MCF 10A (cell line): ENCODE measurements at regions of chr16 and their contacts with region 1.

Region 1: DNA sequence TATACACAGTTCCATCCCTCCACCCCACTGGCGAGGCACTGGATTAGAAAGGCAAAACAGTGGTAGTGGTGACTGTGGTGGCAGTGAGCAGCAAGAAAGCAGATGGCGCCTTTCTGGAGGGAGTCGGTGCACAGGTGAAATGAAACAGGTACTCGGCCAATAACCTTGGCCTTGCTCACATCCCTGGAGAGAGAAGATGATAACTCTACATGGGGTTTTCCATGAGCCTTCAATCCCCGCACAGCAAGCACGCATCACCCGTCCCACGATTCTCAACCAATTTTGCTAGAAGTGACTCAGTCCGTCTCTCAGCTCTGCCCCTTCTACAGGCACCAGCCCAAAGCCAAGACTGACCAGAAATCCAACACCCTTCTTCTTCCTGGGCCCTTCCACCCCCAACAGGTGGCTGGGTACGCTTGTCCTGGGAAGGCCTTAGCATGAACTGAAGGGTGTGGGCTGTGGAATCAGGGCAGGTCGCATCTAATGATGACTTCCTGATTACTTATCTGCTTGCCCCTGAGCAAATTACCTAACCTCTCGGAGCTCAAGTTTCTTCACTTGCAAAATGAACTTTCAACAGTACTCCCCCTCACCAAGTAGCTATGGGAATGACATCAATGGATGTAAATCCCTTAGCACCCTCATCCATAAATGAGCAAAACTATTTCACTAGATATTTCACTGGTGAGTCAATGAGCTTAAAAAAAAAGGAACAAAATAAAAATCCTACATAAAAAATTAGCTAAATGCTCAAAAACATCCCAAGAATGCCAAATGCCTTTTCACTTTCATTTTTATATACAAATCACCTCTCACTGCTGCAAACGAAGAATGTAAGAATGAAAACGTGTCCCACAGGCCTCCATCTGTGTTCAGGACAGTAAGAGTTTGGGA is 18.0 kb downstream of the XPO6 start:
- DNase-seq: peak; percentile 62
- H3K4me3 Mint-ChIP-seq: no peak overlapping the region
- H3K27ac Mint-ChIP-seq: peak overlapping the region; percentile 50
- H3K4me1 Mint-ChIP-seq: peaks cover 33% of the 10 kb centered on the region
- H3K27me3 Mint-ChIP-seq: no peaks in the 10 kb centered on the region
- CTCF ChIP-seq: no peak

Region 2: GRCh38 chr16:28175715-28176114 is 18.1 kb before region 1 on chr16:
- CTCF ChIA-PET with region 1: no interaction called
- POLR2A ChIA-PET with region 1: interaction called, 19 read pairs
- intact Hi-C with region 1: no loop called
- DNase-seq: no peak
- H3K4me3 Mint-ChIP-seq: no peak overlapping the region
- H3K27ac Mint-ChIP-seq: no peak overlapping the region
- H3K4me1 Mint-ChIP-seq: peaks cover 20% of the 10 kb centered on the region
- H3K27me3 Mint-ChIP-seq: no peaks in the 10 kb centered on the region
- CTCF ChIP-seq: no peak

Region 3: DNA sequence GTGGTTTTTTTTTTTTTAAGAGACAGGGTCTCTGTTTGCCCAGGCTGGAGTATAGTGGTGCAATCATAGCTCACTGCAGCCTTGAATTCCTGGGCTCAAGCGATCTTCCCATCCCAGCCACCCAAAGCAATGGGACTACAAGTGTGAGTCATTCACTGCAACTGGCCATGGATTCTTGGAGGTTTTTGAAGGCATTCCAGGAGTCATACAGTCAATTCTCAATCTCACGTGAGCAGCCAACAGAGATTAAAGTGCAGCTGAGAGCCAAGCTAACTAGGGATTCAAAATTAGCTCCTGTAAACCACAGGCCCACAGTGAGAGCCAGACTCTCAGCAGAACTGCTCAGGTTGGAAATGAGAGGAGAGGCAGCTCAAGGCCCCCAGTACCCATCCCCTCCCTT is 12.3 kb before region 1 on chr16:
- CTCF ChIA-PET with region 1: no interaction called
- POLR2A ChIA-PET with region 1: interaction called, 19 read pairs
- intact Hi-C with region 1: no loop called
- DNase-seq: peak; percentile 94
- H3K4me3 Mint-ChIP-seq: no peak overlapping the region
- H3K27ac Mint-ChIP-seq: peak overlapping the region; percentile 62
- H3K4me1 Mint-ChIP-seq: peaks cover 31% of the 10 kb centered on the region
- H3K27me3 Mint-ChIP-seq: no peaks in the 10 kb centered on the region
- CTCF ChIP-seq: no peak